Tibial artery (tissue), 4 donors: ENCODE measurements at regions of chr12 and their contacts with region 1.

Region 1: DNA sequence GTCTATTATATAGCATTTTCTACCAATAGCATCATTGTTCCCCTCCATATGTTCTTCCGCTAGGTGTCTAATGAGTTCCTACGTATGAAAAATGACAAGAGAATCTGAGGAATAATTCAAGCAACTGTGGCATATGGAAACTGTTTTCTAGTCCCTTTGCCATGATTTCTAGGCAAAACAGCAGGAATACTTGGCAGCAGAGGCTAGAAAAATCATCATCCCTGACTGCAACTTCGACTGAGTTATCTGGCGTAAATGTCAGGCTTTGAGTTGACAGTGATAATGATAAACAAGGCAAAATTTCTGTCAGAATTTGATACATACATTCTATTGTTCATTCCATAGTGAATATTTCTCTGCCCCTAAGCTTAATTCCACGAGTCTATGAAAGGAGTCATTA is 572.8 kb upstream of the USP15 start:
- DNase-seq: no peak
- H3K4me3 ChIP-seq: no peak overlapping the region
- H3K27ac ChIP-seq: no peak overlapping the region
- H3K4me1 ChIP-seq: no peaks in the 10 kb centered on the region
- H3K27me3 ChIP-seq: no peaks in the 10 kb centered on the region
- CTCF ChIP-seq: no peak

Region 2: DNA sequence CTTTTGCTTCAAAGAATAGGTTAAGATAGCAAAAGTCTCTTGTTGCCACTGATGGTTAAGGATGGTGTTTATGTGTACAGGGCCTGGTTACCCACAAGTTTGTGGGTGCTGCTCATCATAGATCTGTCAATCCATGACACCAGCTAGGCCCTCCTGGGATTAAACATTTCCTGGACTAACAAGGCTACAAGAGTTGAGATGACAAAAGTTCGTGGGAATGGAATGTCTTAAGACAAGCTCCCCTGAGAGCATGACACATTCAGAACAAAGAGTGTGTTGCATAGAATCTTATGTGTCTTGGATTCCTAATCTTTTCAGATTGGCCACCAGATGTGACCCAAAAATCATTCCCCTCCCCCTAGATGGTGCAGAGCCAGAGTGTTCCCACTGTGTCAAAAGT is 19.7 kb before region 1 on chr12:
- intact Hi-C with region 1: loop called (anchors 1 kb)
- DNase-seq: no peak
- H3K4me3 ChIP-seq: no peak overlapping the region
- H3K27ac ChIP-seq: no peak overlapping the region
- H3K4me1 ChIP-seq: no peaks in the 10 kb centered on the region
- H3K27me3 ChIP-seq: no peaks in the 10 kb centered on the region
- CTCF ChIP-seq: no peak

Region 3: DNA sequence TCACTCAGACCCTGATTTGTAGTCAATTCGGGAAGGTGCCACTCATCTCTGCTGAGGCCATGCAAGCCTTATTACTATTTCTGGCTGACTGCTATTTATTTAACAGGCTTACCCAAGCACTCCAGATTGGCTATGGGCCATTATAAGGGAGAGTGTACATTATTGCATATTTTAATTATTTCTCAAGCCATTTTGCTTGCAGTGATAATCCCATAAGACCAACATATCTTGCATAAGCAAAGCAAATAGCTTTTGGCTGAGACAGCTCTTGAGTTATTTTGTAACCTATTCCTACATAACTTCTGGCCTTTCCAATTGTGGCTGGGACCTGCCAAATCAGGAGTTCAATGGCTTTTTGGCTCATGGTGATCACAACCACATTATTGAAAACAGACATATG is 63.2 kb after region 1 on chr12:
- intact Hi-C with region 1: no loop called
- DNase-seq: no peak
- H3K4me3 ChIP-seq: no peak overlapping the region
- H3K27ac ChIP-seq: peak overlapping the region in 1 of 2 donors; percentile 12
- H3K4me1 ChIP-seq: peaks cover 0 to 14% (median 4%) of the 10 kb centered on the region in 4 donors
- H3K27me3 ChIP-seq: no peaks in the 10 kb centered on the region
- CTCF ChIP-seq: no peak